Right cardiac atrium (tissue), 5 donors: ENCODE measurements at regions of chr2 and their contacts with region 1.

Region 1: GRCh38 chr2:20962939-20963557 is 80.8 kb downstream of the APOB start:
- DNase-seq: peak; percentile 65 to 85 (median 79)
- ATAC-seq: peak; percentile 61 to 69
- H3K4me3 ChIP-seq: no peak overlapping the region
- H3K27ac ChIP-seq: no peak overlapping the region
- H3K4me1 ChIP-seq: no peaks in the 10 kb centered on the region
- H3K27me3 ChIP-seq: no peaks in the 10 kb centered on the region

Region 2: GRCh38 chr2:20661067-20661980 is 301.7 kb before region 1 on chr2:
- intact Hi-C with region 1: loop called (anchors 2 to 5 kb)
- DNase-seq: peak in 1 of 3 donors; percentile 74
- ATAC-seq: peak; percentile 72 to 75
- H3K4me3 ChIP-seq: no peak overlapping the region
- H3K27ac ChIP-seq: no peak overlapping the region
- H3K4me1 ChIP-seq: peaks cover 4% of the 10 kb centered on the region
- H3K27me3 ChIP-seq: no peaks in the 10 kb centered on the region

Region 3: DNA sequence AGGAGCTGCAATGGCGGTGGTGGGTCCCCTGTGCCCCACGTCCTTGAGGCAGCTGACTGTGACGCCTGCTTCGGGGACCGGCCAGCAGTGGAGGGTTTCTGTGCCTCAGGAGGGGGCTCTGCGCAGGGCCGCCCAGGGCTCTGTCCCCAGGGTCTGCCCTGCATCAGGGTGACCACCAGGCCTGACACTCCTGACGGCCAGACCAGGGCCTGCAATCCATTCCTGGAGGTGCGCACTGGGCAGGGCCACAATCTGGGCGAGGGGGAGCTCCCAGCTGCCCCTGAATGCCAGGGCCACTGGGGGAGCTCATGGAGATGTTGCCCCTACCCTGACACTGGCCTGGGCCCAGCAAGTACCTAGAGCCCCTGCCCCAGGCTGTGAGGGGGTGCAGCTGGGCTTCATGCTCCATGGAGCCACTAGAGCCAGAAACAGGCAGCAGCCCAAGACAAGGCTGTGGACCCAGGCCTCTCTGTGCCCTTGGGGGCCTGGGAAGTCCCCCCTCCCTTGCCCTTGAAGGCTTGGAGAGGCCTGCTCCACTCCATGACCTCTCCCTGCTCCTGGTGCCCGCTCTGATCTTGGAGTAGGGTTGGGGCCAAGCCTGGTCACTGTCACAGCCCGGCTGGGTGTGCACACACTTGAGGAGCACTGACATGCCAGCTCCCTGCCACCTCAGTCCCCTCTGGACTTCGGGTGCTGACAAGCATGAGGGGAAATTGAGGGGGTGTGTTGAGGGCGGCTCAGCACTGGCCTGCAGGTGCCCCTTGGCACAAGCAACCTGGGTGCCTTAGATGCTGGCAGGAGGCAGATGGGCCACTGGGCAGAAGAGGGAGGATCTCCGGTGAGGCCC is 196.0 kb before region 1 on chr2:
- intact Hi-C with region 1: loop called in 1 of 4 experiments (anchors 10 kb)
- DNase-seq: peak in 1 of 3 donors; percentile 7
- ATAC-seq: peak; percentile 26 to 31
- H3K4me3 ChIP-seq: no peak overlapping the region
- H3K27ac ChIP-seq: no peak overlapping the region
- H3K4me1 ChIP-seq: no peaks in the 10 kb centered on the region
- H3K27me3 ChIP-seq: no peaks in the 10 kb centered on the region

Region 4: DNA sequence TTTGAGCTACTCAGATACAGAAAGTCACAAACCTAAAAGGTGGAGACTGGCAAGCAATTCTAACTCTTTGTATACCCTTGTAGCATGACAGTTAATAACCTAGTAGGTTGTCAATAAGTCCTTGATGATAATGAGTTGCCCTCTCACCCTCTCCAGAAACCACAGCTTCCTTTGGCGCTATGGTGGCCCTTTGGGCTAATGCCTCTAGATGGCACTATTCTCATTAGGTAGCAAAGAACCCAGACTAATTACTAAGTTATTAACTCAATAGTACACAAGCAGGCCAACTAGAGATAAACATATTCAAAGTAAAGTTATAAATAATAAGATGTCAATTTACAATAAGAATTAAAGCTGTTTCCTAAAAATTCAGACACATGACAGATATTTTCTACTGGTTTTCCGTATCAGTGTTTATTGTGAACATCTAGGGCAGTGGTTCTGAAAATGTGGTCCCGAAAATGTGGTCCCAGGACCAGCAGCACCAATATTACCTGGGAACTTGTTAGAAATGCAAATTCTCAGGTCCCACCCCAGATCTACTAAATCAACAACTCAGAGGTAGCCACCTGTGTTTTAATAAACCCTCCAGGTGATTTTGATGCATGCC is 181.3 kb before region 1 on chr2:
- intact Hi-C with region 1: loop called in 1 of 4 experiments (anchors 10 kb)
- DNase-seq: no peak
- ATAC-seq: no peak
- H3K4me3 ChIP-seq: no peak overlapping the region
- H3K27ac ChIP-seq: no peak overlapping the region
- H3K4me1 ChIP-seq: no peaks in the 10 kb centered on the region
- H3K27me3 ChIP-seq: no peaks in the 10 kb centered on the region